WTC11 (cell line): ENCODE measurements at regions of chr7 and their contacts with region 1.

Region 1: DNA sequence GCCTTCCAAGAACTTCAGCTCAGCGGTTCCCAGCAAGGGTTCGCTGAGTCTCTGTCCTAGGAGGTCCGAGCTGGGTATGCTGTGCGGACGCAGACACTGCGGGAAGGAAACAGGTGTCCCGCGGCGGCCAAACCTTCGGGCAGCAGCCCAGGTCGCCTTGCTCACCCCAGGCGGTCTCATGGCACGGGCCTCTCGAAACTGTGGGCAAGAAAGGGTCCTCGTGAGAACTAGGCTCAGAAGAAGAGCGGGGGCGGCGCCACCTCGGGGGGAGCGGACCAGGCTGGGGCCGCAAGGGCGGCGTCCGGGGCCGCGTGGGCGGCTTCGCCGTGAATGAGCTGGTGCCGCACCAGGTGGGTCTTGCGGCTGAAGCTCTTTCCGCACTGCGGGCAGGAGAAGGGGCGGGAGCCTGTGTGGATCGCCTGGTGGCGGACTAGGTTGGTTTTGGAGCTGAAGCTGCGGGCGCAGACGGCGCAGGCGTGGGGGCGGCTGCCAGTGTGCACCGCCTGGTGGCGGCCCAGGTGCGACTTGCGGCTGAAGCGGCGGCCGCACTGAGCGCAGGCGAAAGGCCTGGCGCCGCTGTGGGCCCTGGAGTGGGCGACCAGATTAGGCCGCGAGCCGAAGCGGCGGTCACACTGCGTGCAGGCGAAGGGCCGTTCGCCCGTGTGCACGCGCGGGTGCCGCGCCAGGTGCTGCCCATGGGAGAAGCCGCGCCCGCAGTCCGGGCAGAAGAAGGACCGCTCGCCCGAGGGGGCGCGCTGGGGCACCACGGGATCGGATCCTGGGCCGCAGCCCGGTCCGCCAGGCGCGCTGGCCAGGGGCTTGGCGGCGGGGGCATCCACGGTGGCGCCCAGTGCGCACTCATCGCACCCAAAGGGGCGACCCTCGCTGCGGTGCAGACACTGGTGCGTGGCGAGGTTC is 8.6 kb downstream of the ZNF467 start:
- DNase-seq: peak; percentile 71
- ATAC-seq: peak; percentile 78
- H3K4me3 Mint-ChIP-seq: peak overlapping the region; percentile 75
- H3K27ac Mint-ChIP-seq: no peak overlapping the region
- H3K4me1 Mint-ChIP-seq: peaks cover 12% of the 10 kb centered on the region
- H3K27me3 Mint-ChIP-seq: peaks cover 100% of the 10 kb centered on the region
- CTCF ChIP-seq: no peak

Region 2: DNA sequence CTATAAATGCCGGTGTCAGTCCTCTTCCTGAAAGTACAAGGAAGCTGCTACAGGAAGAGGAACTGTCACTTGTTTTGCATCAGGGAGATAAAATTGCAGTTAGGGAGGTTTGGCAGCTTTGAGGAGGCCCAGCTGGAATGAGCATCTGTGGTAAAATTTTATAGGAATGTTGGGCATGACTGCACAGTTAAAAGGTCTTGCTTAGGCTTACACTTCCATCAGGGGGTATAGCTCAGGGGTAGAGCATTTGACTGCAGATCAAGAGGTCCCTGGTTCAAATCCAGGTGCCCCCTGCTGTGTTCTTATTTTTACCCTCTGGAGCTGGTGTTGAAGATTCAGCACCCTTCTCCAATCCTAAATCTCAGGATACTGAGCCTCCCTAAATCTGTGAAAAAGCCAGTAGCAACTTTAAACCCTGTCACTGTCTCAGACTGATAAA is 57.3 kb before region 1 on chr7:
- CTCF ChIA-PET with region 1: interaction called, 12 read pairs
- POLR2A ChIA-PET with region 1: no interaction called
- DNase-seq: no peak
- ATAC-seq: no peak
- H3K4me3 Mint-ChIP-seq: no peak overlapping the region
- H3K27ac Mint-ChIP-seq: no peak overlapping the region
- H3K4me1 Mint-ChIP-seq: peaks cover 24% of the 10 kb centered on the region
- H3K27me3 Mint-ChIP-seq: peaks cover 12% of the 10 kb centered on the region
- CTCF ChIP-seq: no peak

Region 3: GRCh38 chr7:149742075-149742701 is 22.6 kb before region 1 on chr7:
- CTCF ChIA-PET with region 1: interaction called, 15 read pairs
- POLR2A ChIA-PET with region 1: no interaction called
- DNase-seq: peak; percentile 88
- ATAC-seq: peak; percentile 96
- H3K4me3 Mint-ChIP-seq: peak overlapping the region; percentile 73
- H3K27ac Mint-ChIP-seq: no peak overlapping the region
- H3K4me1 Mint-ChIP-seq: peaks cover 3% of the 10 kb centered on the region
- H3K27me3 Mint-ChIP-seq: peaks cover 15% of the 10 kb centered on the region
- CTCF ChIP-seq: peak; percentile 75

Region 4: DNA sequence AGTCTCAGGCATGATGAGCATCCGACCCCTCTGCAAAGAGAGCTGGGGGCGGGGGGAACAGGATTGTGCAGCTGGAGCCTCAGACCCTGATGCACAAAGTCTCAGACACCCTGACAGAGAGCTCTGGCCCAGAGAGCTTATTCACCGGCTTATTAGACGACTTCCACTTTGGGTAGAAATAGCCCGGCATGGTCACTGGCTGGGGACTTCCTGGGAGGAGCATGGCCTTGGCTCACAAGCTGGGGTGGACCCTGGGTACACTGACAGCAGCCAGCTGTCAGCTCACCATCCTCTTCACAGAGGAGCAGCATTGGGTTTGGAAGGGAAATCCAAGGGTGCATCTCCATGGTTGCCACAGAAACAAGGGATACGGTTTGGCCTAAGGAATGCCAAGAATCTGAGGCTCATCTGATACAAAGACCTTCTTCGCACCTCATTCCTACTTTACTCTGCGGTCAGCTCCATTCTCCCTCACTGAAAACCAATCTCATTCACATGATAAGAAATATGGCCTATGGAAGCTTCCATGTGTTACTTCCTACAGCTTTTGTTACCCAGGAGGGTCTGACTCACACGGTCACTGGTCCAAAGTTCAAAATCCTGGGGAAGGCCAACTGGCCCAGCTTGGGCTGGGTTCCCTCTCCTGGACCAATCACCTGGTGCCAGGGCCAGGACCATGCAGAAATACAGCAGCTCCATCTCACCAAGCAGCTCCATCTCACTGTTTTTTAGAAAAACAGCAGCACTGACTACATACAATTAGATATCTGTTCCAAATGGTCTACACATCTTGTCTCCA is 16.5 kb before region 1 on chr7:
- CTCF ChIA-PET with region 1: interaction called, 10 read pairs
- POLR2A ChIA-PET with region 1: interaction called, 3 read pairs
- DNase-seq: no peak
- ATAC-seq: peak; percentile 73
- H3K4me3 Mint-ChIP-seq: no peak overlapping the region
- H3K27ac Mint-ChIP-seq: no peak overlapping the region
- H3K4me1 Mint-ChIP-seq: peaks cover 3% of the 10 kb centered on the region
- H3K27me3 Mint-ChIP-seq: peaks cover 3% of the 10 kb centered on the region; the same call in 1 of the 2 replicates
- CTCF ChIP-seq: no peak

Region 5: GRCh38 chr7:149790146-149790548 is 25.4 kb after region 1 on chr7:
- CTCF ChIA-PET with region 1: interaction called, 51 read pairs
- POLR2A ChIA-PET with region 1: no interaction called
- DNase-seq: peak; percentile 78
- ATAC-seq: peak; percentile 68
- H3K4me3 Mint-ChIP-seq: peak overlapping the region; percentile 64
- H3K27ac Mint-ChIP-seq: no peak overlapping the region
- H3K4me1 Mint-ChIP-seq: peaks cover 7% of the 10 kb centered on the region; the same call in 1 of the 2 replicates
- H3K27me3 Mint-ChIP-seq: peaks cover 47% of the 10 kb centered on the region
- CTCF ChIP-seq: peak; percentile 60

Region 6: DNA sequence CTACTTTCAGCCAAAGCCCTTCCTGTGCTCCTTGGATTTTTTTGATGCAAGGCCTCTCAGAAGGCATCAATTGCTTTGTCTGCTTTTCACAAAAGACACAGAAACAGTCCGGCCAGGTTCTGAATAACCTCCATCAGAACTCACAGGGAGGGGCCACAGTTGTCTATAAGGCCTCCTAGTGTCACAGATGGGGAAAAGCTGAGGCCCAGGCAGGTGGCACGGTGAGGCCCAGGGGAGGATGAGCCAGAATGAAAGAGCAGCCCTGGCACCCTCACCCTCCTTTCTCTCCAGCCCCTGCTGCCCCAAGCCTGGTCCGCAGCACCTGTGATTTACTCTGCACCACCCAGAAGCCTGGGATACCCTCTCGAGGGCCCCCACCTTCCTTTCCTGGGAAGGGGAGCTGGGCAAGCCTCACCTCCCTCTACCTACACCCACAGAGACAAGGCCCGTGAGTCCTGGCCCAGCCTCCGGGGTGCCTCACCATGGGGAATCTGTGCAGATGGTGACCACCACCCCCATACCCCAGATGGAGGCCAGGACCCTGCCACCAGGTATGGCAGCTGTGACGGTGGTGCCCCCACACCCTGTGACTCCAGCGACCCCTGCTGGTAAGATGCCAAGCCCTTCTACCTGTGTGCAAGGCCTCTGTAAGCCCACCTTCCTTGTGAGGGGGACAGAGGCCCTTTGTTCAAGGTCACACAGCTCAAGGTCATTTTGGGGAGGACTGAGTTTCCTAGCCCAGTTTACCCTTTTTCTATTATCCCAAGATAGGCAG is 34.8 kb after region 1 on chr7:
- CTCF ChIA-PET with region 1: interaction called, 22 read pairs
- POLR2A ChIA-PET with region 1: no interaction called
- DNase-seq: peak; percentile 83
- ATAC-seq: peak; percentile 80
- H3K4me3 Mint-ChIP-seq: no peak overlapping the region
- H3K27ac Mint-ChIP-seq: no peak overlapping the region
- H3K4me1 Mint-ChIP-seq: no peaks in the 10 kb centered on the region
- H3K27me3 Mint-ChIP-seq: no peaks in the 10 kb centered on the region
- CTCF ChIP-seq: peak; percentile 67

Region 7: DNA sequence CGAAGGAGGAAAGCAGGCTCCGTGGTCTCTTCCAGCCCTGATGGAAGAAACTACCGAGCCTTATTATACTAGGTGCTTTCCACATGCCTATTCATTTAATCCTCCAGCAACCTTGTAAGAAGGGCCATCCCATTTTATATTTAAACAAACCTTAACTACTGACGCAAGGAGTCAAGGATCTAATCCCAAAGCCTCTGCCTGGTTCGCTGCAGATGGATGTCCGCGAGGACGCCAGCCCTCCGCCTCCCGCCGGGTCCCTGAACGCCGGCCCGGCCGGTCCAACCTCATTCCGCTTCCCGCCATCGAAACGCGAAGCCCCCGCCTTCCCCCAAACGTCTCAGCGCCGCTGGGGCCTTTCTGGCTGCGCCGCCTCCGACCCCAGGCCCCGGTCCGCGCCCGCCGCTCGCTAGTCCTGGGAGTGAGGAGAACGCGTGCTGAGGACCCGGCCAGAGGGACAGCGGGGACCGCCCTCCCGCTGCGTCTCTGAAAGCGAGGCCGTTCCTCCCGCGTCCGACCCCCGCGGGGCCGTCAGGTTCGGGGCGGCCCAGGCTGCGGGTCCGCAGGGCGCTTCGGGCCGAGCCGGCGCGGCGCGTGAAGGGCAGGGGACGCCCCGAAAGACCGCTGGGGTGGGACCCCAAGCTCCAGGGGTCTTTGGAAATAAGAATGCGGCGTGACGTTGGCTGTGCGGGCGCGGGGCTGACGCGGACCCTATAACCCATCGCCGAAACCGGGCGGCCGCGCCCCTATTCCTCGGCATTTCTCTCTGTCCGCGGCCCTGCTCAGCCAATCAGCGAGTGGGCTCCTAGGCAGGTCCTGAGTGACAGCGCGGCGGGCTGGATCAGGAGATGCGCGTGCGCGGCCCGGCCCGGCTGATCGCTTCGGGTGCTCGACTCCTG is 108.6 kb after region 1 on chr7 and contains the start of gene ATP6V0E2:
- CTCF ChIA-PET with region 1: no interaction called
- POLR2A ChIA-PET with region 1: no interaction called
- DNase-seq: peak; percentile 91
- ATAC-seq: peak; percentile 91
- H3K4me3 Mint-ChIP-seq: peak within 1 kb of the TSS; percentile 74
- H3K27ac Mint-ChIP-seq: peak within 1 kb of the TSS; percentile 70
- H3K4me1 Mint-ChIP-seq: peaks cover 16% of the 10 kb centered on the region
- H3K27me3 Mint-ChIP-seq: peaks cover 26% of the 10 kb centered on the region
- CTCF ChIP-seq: no peak
- total RNA-seq, gene ATP6V0E2: 22.7 to 26.2 TPM (median 24.8 TPM) in 3 replicates